ENCODE measurements at regions of chr3 and their contacts with region 1.

Region 1: DNA sequence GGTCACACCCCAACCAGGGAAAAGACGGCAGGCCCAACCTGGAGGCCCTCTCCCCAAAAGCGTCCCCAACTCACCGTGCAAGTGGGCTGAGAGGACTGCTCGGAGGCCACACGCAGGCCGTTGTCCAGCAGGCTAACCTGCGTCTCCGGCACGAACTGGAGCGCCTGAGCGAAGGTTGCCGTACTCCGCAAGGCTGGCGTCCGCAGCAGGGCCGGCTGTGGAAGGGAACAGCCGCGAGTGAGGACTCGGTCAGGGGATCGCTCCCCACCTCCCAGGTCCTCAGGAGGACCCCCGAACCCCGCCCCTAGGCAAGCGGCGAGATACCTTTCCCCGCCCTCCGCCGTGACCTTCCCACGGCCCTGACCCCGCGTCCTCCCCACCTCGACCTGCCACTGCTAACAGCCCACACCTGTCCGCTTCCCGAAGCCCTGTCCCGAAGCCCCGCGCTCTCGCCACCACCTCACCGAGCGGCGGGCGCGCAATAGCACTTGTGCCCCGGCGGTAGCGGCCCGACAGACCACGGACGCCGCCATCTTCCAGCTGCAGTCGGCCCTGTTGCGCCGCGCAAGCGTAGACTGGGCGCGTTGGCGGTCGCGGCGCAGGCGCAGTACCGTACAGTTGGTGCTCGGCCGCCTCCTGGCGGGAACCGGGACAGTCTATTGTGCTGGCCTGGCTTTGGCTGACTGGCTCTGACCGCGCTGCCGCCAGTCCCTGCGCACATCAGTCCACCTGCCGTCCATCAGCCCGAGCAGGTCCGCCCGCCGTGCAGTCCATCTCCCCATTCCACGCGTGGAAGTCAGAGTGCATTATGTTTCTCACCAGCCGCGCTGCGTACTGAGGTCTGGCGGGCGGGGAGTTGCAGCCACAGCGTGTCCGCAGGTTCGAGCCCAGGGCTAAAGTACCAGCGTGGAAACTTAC is at the start of gene UQCRC1:
- DNase-seq: peak; percentile 93
- H3K4me3 Mint-ChIP-seq: peak within 1 kb of the TSS; percentile 99
- H3K27ac Mint-ChIP-seq: peak within 1 kb of the TSS; percentile 98
- H3K4me1 Mint-ChIP-seq: peaks cover 21% of the 10 kb centered on the region
- H3K27me3 Mint-ChIP-seq: no peaks in the 10 kb centered on the region
- total RNA-seq, gene UQCRC1: 248 and 273 TPM in 2 replicates

Region 2: DNA sequence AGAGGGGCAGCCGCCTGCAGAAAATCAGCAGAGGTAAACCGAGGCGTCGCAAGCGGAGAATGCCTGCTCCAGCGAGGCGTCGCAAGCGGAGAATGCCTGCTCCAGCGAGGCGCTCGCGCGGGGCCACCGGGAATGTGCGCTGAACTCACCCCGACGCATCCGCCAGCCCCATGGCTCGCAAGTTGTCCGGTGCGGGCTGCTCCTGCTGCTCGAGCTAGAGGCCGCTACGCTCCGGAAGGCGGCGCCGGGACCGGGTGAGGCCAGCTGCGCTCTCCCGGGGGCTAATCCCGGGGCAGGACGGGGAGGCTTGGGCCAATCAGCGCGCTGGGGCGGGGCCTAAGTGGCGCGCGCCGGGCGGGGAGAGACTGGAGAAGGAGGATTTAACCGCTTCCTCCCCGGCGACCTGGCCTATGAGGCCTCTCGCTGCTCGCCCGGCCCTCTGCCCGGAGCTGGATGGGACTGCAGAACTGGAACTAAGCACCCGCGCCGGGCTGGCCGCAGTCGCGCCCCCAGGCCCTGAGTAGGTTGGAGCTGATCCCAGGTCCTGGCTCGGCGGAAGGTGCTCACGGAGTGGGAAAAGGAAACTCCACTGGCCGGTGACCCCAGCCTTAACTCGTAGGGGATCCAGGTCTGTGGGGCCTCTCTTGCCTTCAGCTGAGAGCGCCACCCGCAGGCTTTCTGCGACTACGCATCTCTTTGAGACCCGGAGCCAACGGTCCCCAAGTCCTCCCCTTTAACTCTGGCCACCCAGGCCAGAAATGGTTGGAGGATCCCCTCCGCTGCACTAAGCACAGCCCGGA is 26.1 kb after region 1 on chr3 and contains the start of gene SLC26A6:
- intact Hi-C with region 1: loop called (anchors 1 kb)
- DNase-seq: peak; percentile 94
- H3K4me3 Mint-ChIP-seq: peak within 1 kb of the TSS; percentile 92
- H3K27ac Mint-ChIP-seq: peak within 1 kb of the TSS; percentile 87
- H3K4me1 Mint-ChIP-seq: peaks cover 21% of the 10 kb centered on the region
- H3K27me3 Mint-ChIP-seq: no peaks in the 10 kb centered on the region
- total RNA-seq, gene SLC26A6: 85.1 and 89.6 TPM in 2 replicates

Region 3: GRCh38 chr3:48784426-48785120 is 175.2 kb after region 1 on chr3:
- intact Hi-C with region 1: no loop called
- DNase-seq: no peak
- H3K4me3 Mint-ChIP-seq: no peak overlapping the region
- H3K27ac Mint-ChIP-seq: no peak overlapping the region
- H3K4me1 Mint-ChIP-seq: peaks cover 10% of the 10 kb centered on the region
- H3K27me3 Mint-ChIP-seq: no peaks in the 10 kb centered on the region

Region 4: GRCh38 chr3:48795997-48796732 is 186.8 kb after region 1 on chr3:
- intact Hi-C with region 1: no loop called
- DNase-seq: no peak
- H3K4me3 Mint-ChIP-seq: no peak overlapping the region
- H3K27ac Mint-ChIP-seq: no peak overlapping the region
- H3K4me1 Mint-ChIP-seq: no peaks in the 10 kb centered on the region
- H3K27me3 Mint-ChIP-seq: no peaks in the 10 kb centered on the region